Panc1 (cell line): ENCODE measurements at regions of chr9 and their contacts with region 1.

Region 1: DNA sequence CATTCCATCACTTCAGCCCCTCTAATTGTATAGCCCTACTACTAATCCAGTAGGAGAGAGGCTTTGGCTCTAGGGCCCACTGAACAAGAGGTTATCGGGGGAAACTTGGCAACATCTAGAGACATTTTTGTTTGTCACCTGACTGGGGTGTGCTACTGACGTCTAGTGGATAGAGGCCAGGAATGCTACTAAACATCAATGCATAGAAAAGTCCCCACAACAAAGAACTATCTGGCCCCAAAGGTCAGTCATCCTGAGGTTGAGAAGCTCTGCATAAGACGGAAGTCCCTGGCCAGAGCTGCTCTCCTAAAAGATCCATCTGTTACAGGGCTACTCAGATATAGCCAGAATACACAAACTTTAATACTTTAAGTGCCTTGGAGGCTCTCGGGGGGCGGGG is 570.6 kb upstream of the KLF4 start:
- DNase-seq: no peak
- ATAC-seq: no peak
- H3K4me3 ChIP-seq: no peak overlapping the region
- H3K27ac ChIP-seq: no peak overlapping the region
- H3K4me1 ChIP-seq: no peaks in the 10 kb centered on the region
- H3K27me3 ChIP-seq: no peaks in the 10 kb centered on the region
- CTCF ChIP-seq: no peak

Region 2: DNA sequence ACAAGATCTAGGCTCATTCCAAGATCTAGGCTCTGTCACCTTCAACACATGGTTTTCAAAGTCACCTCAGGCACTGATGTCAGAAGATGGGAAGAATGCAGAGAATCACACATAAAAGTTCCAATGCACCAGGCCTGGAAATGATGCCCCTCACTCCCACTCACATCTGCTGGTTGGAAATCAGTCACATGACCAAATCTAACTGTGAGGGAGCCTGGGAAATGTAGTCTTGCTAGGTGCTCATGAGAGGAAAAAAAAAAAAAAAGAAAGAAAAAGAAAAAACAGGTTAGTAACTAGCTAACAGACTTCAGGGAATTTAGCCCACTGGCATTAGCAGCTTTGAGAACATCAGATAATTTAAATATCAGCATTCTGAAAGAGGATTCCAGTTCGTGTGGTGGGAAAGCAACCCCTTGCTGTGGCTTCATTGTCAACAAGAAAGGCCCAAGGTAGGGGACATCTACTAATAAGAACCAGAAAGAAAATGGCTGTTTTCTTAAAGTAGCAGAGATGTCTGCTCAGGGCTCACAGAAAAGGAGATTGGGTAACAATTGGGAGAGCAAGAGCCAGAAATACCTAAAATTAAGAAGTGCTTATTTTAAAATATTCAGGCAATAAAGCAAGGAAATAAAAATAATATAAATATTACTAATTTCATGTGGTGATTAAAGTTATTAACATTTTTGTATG is 181.4 kb after region 1 on chr9:
- CTCF ChIA-PET with region 1: no interaction called
- POLR2A ChIA-PET with region 1: interaction called, 10 read pairs
- in situ Hi-C with region 1: no loop called
- intact Hi-C with region 1: no loop called
- DNase-seq: no peak
- ATAC-seq: no peak
- H3K4me3 ChIP-seq: no peak overlapping the region
- H3K27ac ChIP-seq: no peak overlapping the region
- H3K4me1 ChIP-seq: no peaks in the 10 kb centered on the region
- H3K27me3 ChIP-seq: no peaks in the 10 kb centered on the region
- CTCF ChIP-seq: no peak

Region 3: DNA sequence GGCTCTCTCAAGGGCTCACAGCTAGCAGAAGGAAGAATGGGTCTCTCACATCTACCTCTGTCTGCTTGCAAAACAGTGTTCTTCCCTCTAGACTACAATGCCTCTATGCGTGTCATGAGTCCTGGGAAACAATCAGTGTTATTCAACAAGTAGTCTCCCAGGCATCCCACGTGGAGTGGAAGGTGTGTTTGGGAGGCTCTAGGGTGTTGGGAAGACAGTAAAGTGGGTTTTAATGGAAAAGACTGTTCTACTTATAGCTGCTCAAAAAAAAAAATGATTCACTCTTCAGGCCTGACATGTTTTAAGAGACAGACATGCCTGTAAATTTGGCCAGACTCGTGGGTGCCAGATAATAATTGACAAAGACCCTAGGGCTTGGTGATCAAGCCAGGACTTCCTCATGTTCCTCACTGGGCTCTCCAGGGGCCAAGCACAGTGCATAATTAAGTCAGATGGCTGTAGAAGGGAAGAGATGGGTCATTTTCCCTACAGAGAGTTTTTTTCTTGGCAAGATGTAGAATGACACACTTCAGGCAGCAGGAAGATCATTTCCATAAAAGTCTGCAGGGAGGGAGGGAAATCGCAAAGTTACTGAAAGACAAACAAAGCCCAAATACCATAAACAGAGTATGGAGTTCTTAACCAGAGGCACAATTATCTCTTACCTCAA is 549.2 kb after region 1 on chr9:
- CTCF ChIA-PET with region 1: no interaction called
- POLR2A ChIA-PET with region 1: no interaction called
- in situ Hi-C with region 1: no loop called
- intact Hi-C with region 1: no loop called
- DNase-seq: no peak
- ATAC-seq: no peak
- H3K4me3 ChIP-seq: no peak overlapping the region
- H3K27ac ChIP-seq: no peak overlapping the region
- H3K4me1 ChIP-seq: no peaks in the 10 kb centered on the region
- H3K27me3 ChIP-seq: no peaks in the 10 kb centered on the region
- CTCF ChIP-seq: no peak